ENCODE measurements at regions of chr11 and their contacts with region 1.

Region 1: GRCh38 chr11:66686801-66687750 is 9.4 kb upstream of the RBM4B start:
- DNase-seq: no peak
- ATAC-seq: no peak

Region 2: GRCh38 chr11:66568124-66568916 is 118.8 kb before region 1 on chr11 and contains the start of gene CTSF:
- intact Hi-C with region 1: loop called in 1 of 2 experiments (anchors 10 kb)
- DNase-seq: peak; percentile 84 to 85
- ATAC-seq: peak; percentile 99
- total RNA-seq, gene CTSF: 5.6 to 20.4 TPM